ENCODE measurements at regions of chrX and their contacts with region 1.

Region 1: DNA sequence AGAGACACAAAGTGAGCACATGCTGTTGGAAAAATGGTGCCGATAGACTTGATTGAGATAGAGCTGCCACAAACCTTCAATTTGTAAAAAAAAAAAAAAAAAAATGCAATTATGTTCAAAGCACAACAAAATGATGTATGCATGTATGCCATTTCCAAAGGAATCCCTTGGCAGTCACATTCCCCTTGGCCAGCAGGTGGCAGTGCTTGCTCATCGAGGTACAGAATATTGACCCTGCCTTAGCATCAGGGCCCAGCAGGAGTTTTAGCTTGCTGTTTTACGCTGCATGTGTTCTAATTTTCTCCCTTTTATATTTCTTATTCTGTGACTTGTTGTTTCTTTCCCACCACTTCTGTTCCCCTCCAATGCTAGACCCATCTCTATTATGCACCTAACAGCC is 34.5 kb upstream of the CYBB start:
- DNase-seq: peak; percentile 76
- H3K4me3 Mint-ChIP-seq: no peak overlapping the region
- H3K27ac Mint-ChIP-seq: no peak overlapping the region
- H3K4me1 Mint-ChIP-seq: peaks cover 17% of the 10 kb centered on the region
- H3K27me3 Mint-ChIP-seq: no peaks in the 10 kb centered on the region
- CTCF ChIP-seq: peak; percentile 62

Region 2: GRCh38 chrX:38175140-38175539 is 429.8 kb after region 1 on chrX:
- CTCF ChIA-PET with region 1: no interaction called
- intact Hi-C with region 1: loop called (anchors 1 kb)
- DNase-seq: peak; percentile 56
- H3K4me3 Mint-ChIP-seq: no peak overlapping the region
- H3K27ac Mint-ChIP-seq: no peak overlapping the region
- H3K4me1 Mint-ChIP-seq: no peaks in the 10 kb centered on the region
- H3K27me3 Mint-ChIP-seq: peaks cover 4% of the 10 kb centered on the region
- CTCF ChIP-seq: peak; percentile 39